ENCODE measurements at regions of chr19 and their contacts with region 1.

Region 1: GRCh38 chr19:7562646-7563393 is 27.3 kb downstream of the PNPLA6 start:
- DNase-seq: no peak
- ATAC-seq: no peak
- H3K4me3 ChIP-seq: no peak overlapping the region
- H3K27ac ChIP-seq: no peak overlapping the region
- H3K4me1 ChIP-seq: no peaks in the 10 kb centered on the region
- H3K27me3 ChIP-seq: no peaks in the 10 kb centered on the region

Region 2: GRCh38 chr19:7652061-7652641 is 89.3 kb after region 1 on chr19:
- intact Hi-C with region 1: no loop called
- DNase-seq: peak; percentile 68 to 92 (median 88)
- ATAC-seq: peak; percentile 65 to 80
- H3K4me3 ChIP-seq: peak overlapping the region; percentile 9
- H3K27ac ChIP-seq: no peak overlapping the region
- H3K4me1 ChIP-seq: no peaks in the 10 kb centered on the region
- H3K27me3 ChIP-seq: no peaks in the 10 kb centered on the region

Region 3: GRCh38 chr19:7674010-7675005 is 111.5 kb after region 1 on chr19:
- intact Hi-C with region 1: loop called in 1 of 4 experiments (anchors 5 kb)
- DNase-seq: peak; percentile 65 to 87 (median 83)
- ATAC-seq: peak; percentile 57 to 93
- H3K4me3 ChIP-seq: no peak overlapping the region
- H3K27ac ChIP-seq: no peak overlapping the region
- H3K4me1 ChIP-seq: no peaks in the 10 kb centered on the region
- H3K27me3 ChIP-seq: no peaks in the 10 kb centered on the region